ENCODE measurements at regions of chr12 and their contacts with region 1.

Region 1: GRCh38 chr12:110501752-110502738 is at the starts of genes RAD9B and VPS29:
- DNase-seq: peak; percentile 99
- total RNA-seq, gene RAD9B: 0.65 TPM
- total RNA-seq, gene VPS29: 76.3 TPM

Region 2: DNA sequence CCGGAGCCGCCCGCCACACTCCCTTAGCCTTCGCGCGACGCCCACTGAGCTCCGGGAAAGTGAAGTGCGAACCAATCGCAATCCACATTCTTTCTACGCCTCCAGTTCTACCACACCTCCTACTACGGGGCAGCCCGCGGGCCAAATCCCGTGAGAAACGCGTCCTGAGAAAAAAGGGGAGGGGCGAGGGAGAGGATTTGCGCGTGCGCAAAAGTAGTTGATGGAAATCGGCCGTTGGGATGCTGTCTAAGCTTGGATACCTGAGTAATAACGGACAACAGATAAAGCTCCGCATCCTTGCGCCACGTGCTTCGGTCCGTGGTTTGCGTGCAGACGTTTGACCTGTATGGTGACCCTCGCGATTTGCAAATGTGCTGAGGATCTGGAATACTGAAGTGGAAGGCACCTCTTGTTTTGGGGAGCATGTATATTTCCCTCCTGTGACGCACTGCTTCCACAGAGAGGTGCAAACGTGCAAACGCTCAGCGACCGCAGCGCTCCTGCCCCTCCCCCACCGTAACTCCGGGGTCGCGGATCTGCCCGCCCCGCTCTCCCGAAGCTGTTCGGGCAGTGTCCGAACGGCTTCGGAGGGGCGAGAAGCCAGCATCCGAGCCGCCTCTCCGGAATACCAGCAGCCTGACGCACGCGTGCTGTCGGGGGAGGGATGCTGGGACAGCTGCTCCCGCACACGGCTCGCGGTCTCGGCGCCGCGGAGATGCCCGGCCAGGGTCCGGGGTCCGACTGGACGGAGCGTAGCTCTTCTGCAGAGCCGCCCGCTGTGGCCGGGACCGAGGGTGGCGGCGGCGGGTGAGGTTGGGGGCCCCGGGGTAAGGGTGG is 33.6 kb before region 1 on chr12 and contains the starts of genes FAM216A and GPN3:
- intact Hi-C with region 1: loop called (anchors 1 kb)
- DNase-seq: peak; percentile 98
- total RNA-seq, gene FAM216A: 4.7 TPM
- total RNA-seq, gene GPN3: 27.1 TPM

Region 3: GRCh38 chr12:110555577-110556406 is 53.7 kb after region 1 on chr12:
- intact Hi-C with region 1: no loop called
- DNase-seq: no peak